T-cell (primary cell): ENCODE measurements at regions of chr6 and their contacts with region 1.

Region 1: GRCh38 chr6:30541515-30542403 is 14.5 kb downstream of the GNL1 start:
- DNase-seq: peak; percentile 54 to 94 (median 74)
- ATAC-seq: peak; percentile 68 to 80 (median 76)
- H3K4me3 ChIP-seq: peak overlapping the region; percentile 46 to 74
- H3K4me3 Mint-ChIP-seq: peak overlapping the region; percentile 78 to 81 (median 81)
- H3K27ac ChIP-seq: peak overlapping the region; percentile 74
- H3K27ac Mint-ChIP-seq: peak overlapping the region; percentile 91 to 95
- H3K4me1 ChIP-seq: peaks cover 26 to 31% of the 10 kb centered on the region in 2 experiments
- H3K4me1 Mint-ChIP-seq: peaks cover 34 to 37% (median 35%) of the 10 kb centered on the region in 3 donors
- H3K27me3 ChIP-seq: no peaks in the 10 kb centered on the region
- H3K27me3 Mint-ChIP-seq: no peaks in the 10 kb centered on the region

Region 2: GRCh38 chr6:30311101-30311500 is 230.7 kb before region 1 on chr6:
- CTCF ChIA-PET with region 1: no interaction called
- POLR2A ChIA-PET with region 1: no interaction called
- DNase-seq: peak in 1 of 35 experiments; percentile 11
- ATAC-seq: no peak
- H3K4me3 ChIP-seq: no peak overlapping the region
- H3K4me3 Mint-ChIP-seq: no peak overlapping the region
- H3K27ac ChIP-seq: no peak overlapping the region
- H3K27ac Mint-ChIP-seq: no peak overlapping the region
- H3K4me1 ChIP-seq: no peaks in the 10 kb centered on the region
- H3K4me1 Mint-ChIP-seq: peaks cover 43 to 63% (median 59%) of the 10 kb centered on the region in 3 donors
- H3K27me3 ChIP-seq: no peaks in the 10 kb centered on the region
- H3K27me3 Mint-ChIP-seq: no peaks in the 10 kb centered on the region

Region 3: GRCh38 chr6:30483677-30484279 is 58.0 kb before region 1 on chr6:
- CTCF ChIA-PET with region 1: interaction called, 3 to 73 read pairs
- POLR2A ChIA-PET with region 1: interaction called, 4 to 6 read pairs
- DNase-seq: peak in 2 of 35 experiments; percentile 48 to 77
- ATAC-seq: no peak
- H3K4me3 ChIP-seq: no peak overlapping the region
- H3K4me3 Mint-ChIP-seq: no peak overlapping the region
- H3K27ac ChIP-seq: no peak overlapping the region
- H3K27ac Mint-ChIP-seq: no peak overlapping the region
- H3K4me1 ChIP-seq: peaks cover 12 to 35% of the 10 kb centered on the region in 2 experiments
- H3K4me1 Mint-ChIP-seq: peaks cover 31 to 43% (median 40%) of the 10 kb centered on the region in 3 donors
- H3K27me3 ChIP-seq: peaks cover 0 to 21% of the 10 kb centered on the region in 2 experiments
- H3K27me3 Mint-ChIP-seq: peaks cover 17 to 31% of the 10 kb centered on the region in 2 donors

Region 4: DNA sequence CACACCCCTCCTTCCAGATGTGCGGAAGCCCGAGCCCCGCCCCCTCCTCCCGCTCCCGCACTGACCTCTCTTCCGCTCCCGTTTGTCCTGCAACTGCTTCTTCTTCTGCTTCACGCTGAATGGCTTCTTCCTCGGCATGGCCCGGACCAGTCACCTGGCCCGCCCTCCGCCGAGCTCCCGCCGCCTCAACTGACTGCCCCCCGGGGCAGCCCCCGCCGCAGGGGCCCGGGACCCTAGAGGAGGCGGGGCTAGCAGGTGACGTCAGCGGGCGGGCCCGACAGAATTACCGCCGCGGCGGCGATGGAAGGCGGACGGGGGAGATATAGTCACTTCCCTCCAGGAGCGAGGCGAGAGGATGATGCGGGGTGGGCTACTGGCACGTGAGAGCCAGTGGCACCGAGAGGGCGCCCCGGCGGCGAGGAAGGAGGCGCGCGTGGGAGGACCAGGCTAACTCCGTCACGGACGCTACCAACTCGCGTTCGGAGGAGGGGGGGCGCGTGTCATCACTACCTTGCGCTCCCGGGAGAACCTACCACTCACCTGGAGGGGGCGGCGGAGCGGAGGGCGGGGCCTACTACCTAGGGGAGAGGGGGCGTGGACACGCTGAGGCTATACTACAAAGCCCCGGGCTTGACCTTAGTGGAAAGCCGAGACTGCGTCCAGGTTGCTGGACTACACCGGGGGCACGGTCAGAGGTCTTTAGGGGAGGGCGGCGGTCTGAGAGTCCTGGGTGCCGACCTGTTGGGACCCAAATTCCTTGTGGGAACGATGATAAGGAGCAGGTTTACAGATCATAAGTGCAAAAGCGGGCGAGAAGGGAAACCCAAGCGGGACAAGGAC is 14.5 kb after region 1 on chr6 and contains the start of gene GNL1:
- CTCF ChIA-PET with region 1: interaction called, 5 to 17 read pairs
- POLR2A ChIA-PET with region 1: interaction called, 6 to 16 read pairs
- DNase-seq: peak; percentile 96 to 99 (median 99)
- ATAC-seq: peak; percentile 87 to 93 (median 92)
- H3K4me3 ChIP-seq: peak within 1 kb of the TSS; percentile 95 to 97
- H3K4me3 Mint-ChIP-seq: peak within 1 kb of the TSS; percentile 98 to 100 (median 98)
- H3K27ac ChIP-seq: peak within 1 kb of the TSS; percentile 98
- H3K27ac Mint-ChIP-seq: peak within 1 kb of the TSS; percentile 99 to 100
- H3K4me1 ChIP-seq: peaks cover 19 to 28% of the 10 kb centered on the region in 2 experiments
- H3K4me1 Mint-ChIP-seq: peaks cover 50 to 51% (median 51%) of the 10 kb centered on the region in 3 donors
- H3K27me3 ChIP-seq: no peaks in the 10 kb centered on the region
- H3K27me3 Mint-ChIP-seq: no peaks in the 10 kb centered on the region
- total RNA-seq, gene GNL1: 65.5 to 167 (median 72.9) TPM

Region 5: GRCh38 chr6:30583921-30584320 is 42.2 kb after region 1 on chr6:
- CTCF ChIA-PET with region 1: interaction called in 1 of 2 experiments, 4 read pairs
- POLR2A ChIA-PET with region 1: interaction called, 7 to 11 read pairs
- DNase-seq: no peak
- ATAC-seq: no peak
- H3K4me3 ChIP-seq: no peak overlapping the region
- H3K4me3 Mint-ChIP-seq: no peak overlapping the region
- H3K27ac ChIP-seq: no peak overlapping the region
- H3K27ac Mint-ChIP-seq: peak overlapping the region in 1 of 2 donors; percentile 22
- H3K4me1 ChIP-seq: no peaks in the 10 kb centered on the region
- H3K4me1 Mint-ChIP-seq: no peaks in the 10 kb centered on the region
- H3K27me3 ChIP-seq: no peaks in the 10 kb centered on the region
- H3K27me3 Mint-ChIP-seq: no peaks in the 10 kb centered on the region

Region 6: GRCh38 chr6:30664994-30665767 is 123.4 kb after region 1 on chr6:
- CTCF ChIA-PET with region 1: no interaction called
- POLR2A ChIA-PET with region 1: no interaction called
- DNase-seq: no peak
- ATAC-seq: no peak
- H3K4me3 ChIP-seq: no peak overlapping the region
- H3K4me3 Mint-ChIP-seq: no peak overlapping the region
- H3K27ac ChIP-seq: no peak overlapping the region
- H3K27ac Mint-ChIP-seq: no peak overlapping the region
- H3K4me1 ChIP-seq: no peaks in the 10 kb centered on the region
- H3K4me1 Mint-ChIP-seq: peaks cover 8 to 18% (median 12%) of the 10 kb centered on the region in 3 donors
- H3K27me3 ChIP-seq: no peaks in the 10 kb centered on the region
- H3K27me3 Mint-ChIP-seq: no peaks in the 10 kb centered on the region

Region 7: DNA sequence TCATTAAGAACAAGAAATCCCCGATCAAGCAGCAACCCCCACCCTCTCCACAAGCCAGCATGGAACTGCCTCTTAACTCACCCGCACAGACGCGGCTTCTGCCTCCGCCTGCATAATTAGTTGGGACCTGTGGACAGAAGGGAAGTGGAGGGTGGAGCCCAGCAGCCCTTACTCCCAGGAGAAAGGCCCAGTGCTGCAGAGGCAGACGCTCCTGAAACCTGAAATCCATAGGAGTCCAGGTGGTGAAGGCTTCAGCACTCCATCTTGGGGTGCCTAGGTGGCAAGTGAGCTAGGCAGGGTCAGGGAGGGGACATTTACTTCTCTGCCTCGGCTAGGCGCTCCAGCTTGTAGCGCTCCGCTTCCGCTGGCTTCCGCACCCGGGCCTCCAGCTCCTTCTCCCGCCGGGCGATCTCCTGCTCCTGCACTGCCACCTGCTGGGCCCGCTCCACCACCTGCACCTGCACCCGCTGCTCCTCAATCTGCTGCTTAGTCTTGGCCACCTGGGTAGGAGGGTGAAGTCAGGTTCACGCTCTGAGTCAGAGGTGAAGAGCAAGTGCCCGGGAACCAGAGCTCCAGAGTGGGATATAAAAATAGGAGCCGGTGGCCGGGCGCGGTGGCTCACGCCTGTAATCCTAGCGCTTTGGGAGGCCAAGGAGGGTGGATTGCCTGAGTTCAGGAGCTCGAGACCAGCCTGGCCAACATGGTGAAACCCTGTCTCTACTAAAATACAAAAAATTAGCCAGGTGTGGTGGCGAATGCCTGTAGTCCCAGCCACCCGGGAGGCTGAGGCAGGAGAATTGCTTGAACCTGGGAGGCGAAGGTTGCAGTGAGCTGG is 189.1 kb after region 1 on chr6:
- CTCF ChIA-PET with region 1: interaction called in 1 of 2 experiments, 19 read pairs
- POLR2A ChIA-PET with region 1: no interaction called
- DNase-seq: peak; percentile 67 to 89 (median 79)
- ATAC-seq: peak; percentile 95 to 97 (median 97)
- H3K4me3 ChIP-seq: peak overlapping the region in 1 of 2 donors; percentile 6
- H3K4me3 Mint-ChIP-seq: peak overlapping the region in 1 of 3 donors; percentile 56
- H3K27ac ChIP-seq: peak overlapping the region; percentile 28
- H3K27ac Mint-ChIP-seq: peak overlapping the region; percentile 71 to 79
- H3K4me1 ChIP-seq: peaks cover 8 to 35% of the 10 kb centered on the region in 2 experiments
- H3K4me1 Mint-ChIP-seq: peaks cover 31 to 46% (median 33%) of the 10 kb centered on the region in 3 donors
- H3K27me3 ChIP-seq: no peaks in the 10 kb centered on the region
- H3K27me3 Mint-ChIP-seq: no peaks in the 10 kb centered on the region